Activated CD4-positive, alpha-beta memory T cell treated with anti-CD3 and anti-CD28 coated beads for 36 hours (primary cell): ENCODE measurements at regions of chr7 and their contacts with region 1.

Region 1: GRCh38 chr7:138608275-138608674 is 92.9 kb downstream of the SVOPL start:
- DNase-seq: peak; percentile 80
- H3K4me3 Mint-ChIP-seq: no peak overlapping the region
- H3K27ac Mint-ChIP-seq: peak overlapping the region; percentile 36
- H3K4me1 Mint-ChIP-seq: peaks cover 15% of the 10 kb centered on the region
- H3K27me3 Mint-ChIP-seq: no peaks in the 10 kb centered on the region

Region 2: GRCh38 chr7:138625849-138626230 is 17.6 kb after region 1 on chr7:
- CTCF ChIA-PET with region 1: interaction called, 3 read pairs
- POLR2A ChIA-PET with region 1: no interaction called
- intact Hi-C with region 1: loop called (anchors 2 kb)
- DNase-seq: no peak
- H3K4me3 Mint-ChIP-seq: no peak overlapping the region
- H3K27ac Mint-ChIP-seq: no peak overlapping the region
- H3K4me1 Mint-ChIP-seq: peaks cover 24% of the 10 kb centered on the region
- H3K27me3 Mint-ChIP-seq: no peaks in the 10 kb centered on the region

Region 3: GRCh38 chr7:138948108-138948802 is 340.0 kb after region 1 on chr7:
- CTCF ChIA-PET with region 1: no interaction called
- POLR2A ChIA-PET with region 1: no interaction called
- intact Hi-C with region 1: no loop called
- DNase-seq: no peak
- H3K4me3 Mint-ChIP-seq: no peak overlapping the region
- H3K27ac Mint-ChIP-seq: no peak overlapping the region
- H3K4me1 Mint-ChIP-seq: no peaks in the 10 kb centered on the region
- H3K27me3 Mint-ChIP-seq: peaks cover 3% of the 10 kb centered on the region